ENCODE measurements at regions of chr10 and their contacts with region 1.

Region 1: DNA sequence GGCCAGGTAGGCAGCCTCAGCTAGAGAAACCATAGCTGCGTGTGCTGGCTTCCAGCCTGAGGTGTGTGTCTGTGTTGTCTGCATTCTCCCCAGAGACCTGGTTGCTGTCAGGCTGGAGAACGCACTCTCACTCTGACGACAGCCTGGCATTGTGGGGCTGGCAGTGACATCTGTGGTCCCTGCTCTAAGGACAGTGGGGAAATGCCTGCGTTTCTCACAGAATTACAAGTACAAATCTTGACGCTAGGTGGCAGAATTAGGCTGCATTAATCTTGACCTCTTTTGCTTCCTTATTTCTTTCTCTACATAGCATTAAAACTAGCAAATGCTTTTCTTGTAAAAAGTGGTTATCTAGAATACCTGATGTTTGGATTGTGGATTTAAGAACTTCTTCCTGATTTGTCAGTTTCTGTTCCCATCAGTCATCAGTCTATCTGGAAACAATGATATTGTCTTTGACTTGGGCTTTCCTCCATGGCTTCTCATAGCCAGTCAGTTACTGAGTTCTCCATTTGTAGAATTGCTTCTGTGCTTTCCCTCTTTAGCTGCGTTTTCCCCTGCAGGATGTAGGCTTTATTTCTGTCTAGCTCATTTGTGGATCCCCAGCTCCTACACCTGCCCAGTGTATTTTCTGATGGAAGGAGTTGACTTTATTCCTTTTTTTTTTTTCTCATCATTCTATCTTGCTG is 86.0 kb downstream of the FANK1 start:
- DNase-seq: peak in 3 of 5 donors; percentile 28 to 56 (median 37)
- H3K4me3 ChIP-seq: no peak overlapping the region
- H3K27ac ChIP-seq: no peak overlapping the region
- H3K4me1 ChIP-seq: peaks cover 2% of the 10 kb centered on the region
- H3K27me3 ChIP-seq: no peaks in the 10 kb centered on the region
- CTCF ChIP-seq: peak; percentile 44 to 83 (median 73)
- EP300 ChIP-seq: no peak
- POLR2A ChIP-seq: no peak

Region 2: DNA sequence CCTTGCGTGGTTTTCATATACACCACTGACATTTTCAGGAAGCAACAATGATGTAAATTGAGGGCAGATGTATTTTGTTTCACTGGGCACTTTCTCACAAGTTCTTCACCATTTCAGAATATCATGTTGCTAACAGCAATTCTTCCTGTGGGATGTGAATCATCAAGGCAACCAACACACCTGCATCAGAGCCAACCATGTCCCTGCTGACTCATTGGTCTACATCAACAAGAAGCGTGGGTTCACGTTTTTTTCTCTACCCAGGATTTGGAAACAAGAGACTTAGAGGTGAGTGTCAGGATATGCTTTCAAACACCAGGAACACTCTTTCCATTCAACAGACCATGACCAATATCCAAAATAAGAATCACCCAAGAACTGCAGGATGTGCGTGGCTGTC is 503.3 kb before region 1 on chr10:
- intact Hi-C with region 1: no loop called
- DNase-seq: no peak
- H3K4me3 ChIP-seq: no peak overlapping the region
- H3K27ac ChIP-seq: no peak overlapping the region
- H3K4me1 ChIP-seq: peaks cover 1% of the 10 kb centered on the region
- H3K27me3 ChIP-seq: no peaks in the 10 kb centered on the region
- CTCF ChIP-seq: no peak
- EP300 ChIP-seq: no peak
- POLR2A ChIP-seq: no peak

Region 3: DNA sequence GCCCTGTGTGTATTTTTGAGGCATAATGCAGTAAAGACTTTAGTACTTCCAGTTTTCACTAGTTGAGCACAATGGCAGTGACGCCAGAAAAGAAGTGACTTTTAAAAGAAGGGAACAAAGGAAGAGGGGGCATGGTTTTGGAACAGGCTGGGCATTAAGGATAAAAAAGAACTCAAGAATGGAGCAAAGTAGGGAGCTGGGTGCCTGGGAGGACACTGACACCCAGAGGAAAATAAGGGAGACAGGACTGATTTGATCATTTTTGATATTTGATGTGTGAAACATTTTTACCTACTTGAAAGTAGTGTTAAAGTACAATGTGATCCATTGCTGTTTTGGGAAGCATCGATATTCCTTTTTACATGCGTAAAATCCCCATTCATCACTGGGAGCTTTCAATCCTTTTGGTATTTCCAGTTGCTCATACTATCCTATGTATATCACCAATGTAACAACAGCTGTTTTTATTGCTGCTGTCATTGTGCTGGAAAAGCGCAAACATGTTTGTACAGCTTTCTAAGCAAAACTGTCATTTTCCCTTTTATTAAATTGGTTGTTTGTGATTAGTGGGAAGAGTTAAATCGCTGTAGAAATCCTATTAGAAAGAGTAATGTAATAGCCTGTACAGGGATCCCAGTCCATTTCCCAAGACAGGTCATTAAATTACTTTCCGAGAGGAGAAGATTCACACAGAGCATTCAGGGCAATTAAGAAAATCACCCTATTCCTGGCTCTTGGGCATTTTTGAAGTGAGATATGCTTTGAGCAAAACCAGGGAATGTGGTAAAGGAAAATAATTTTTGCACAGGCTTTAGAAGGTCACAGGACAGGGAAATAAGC is 320.6 kb after region 1 on chr10:
- intact Hi-C with region 1: loop called in 1 of 4 experiments (anchors 2 kb)
- DNase-seq: peak in 1 of 5 donors; percentile 34
- H3K4me3 ChIP-seq: no peak overlapping the region
- H3K27ac ChIP-seq: peak overlapping the region in 1 of 2 donors; percentile 3
- H3K4me1 ChIP-seq: peaks cover 14% of the 10 kb centered on the region
- H3K27me3 ChIP-seq: no peaks in the 10 kb centered on the region
- CTCF ChIP-seq: peak in 2 of 3 donors; percentile 10 to 42
- EP300 ChIP-seq: no peak
- POLR2A ChIP-seq: no peak

Region 4: DNA sequence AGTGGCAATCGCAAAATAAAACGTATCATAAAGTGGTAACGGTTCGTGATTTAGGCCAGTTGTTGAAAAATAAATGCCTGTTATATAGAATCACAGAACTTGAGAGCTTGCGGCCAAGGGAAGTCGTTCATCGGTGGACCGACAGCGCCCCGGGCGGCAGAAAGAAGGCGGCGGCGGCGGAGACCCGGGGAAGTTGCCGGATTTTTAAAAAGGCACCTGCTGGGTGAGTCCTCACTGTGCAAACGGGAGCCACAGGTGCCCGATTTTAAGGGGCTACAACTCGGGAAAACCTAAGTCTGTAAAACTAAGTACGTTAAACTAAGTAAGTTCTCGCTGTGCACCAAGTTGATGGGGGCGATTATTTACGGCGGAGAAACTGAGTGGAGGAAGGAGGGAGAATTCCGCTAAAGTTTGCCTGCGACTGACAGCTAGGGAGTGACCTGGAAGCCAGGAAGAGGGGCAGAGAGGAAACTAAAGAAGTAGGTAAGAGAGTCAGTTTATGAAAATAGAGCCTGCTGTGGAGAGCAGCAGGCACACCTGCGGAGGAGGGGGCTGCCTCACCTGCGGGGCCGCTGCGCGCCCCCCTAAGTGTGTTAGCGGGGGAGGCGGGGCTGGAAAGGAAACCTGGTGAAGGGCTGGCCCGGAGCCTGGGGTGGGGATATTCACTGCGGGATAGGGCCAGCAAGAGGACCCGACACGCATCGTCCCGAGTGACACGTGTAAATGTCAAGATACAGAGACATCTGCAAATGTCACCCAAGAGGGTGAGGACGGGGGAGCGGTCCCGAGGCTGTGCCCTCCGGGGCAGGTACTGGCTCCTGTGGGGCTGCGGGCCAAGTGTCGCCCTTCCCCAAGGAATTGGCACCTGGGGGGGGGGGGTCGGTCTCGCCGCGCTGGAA is 404.9 kb after region 1 on chr10:
- intact Hi-C with region 1: loop called (anchors 2 to 10 kb)
- DNase-seq: peak; percentile 75 to 87 (median 81)
- H3K4me3 ChIP-seq: peak overlapping the region; percentile 36
- H3K27ac ChIP-seq: peak overlapping the region; percentile 19 to 66
- H3K4me1 ChIP-seq: peaks cover 5% of the 10 kb centered on the region
- H3K27me3 ChIP-seq: no peaks in the 10 kb centered on the region
- CTCF ChIP-seq: peak; percentile 67 to 80 (median 75)
- EP300 ChIP-seq: no peak
- POLR2A ChIP-seq: no peak

Region 5: DNA sequence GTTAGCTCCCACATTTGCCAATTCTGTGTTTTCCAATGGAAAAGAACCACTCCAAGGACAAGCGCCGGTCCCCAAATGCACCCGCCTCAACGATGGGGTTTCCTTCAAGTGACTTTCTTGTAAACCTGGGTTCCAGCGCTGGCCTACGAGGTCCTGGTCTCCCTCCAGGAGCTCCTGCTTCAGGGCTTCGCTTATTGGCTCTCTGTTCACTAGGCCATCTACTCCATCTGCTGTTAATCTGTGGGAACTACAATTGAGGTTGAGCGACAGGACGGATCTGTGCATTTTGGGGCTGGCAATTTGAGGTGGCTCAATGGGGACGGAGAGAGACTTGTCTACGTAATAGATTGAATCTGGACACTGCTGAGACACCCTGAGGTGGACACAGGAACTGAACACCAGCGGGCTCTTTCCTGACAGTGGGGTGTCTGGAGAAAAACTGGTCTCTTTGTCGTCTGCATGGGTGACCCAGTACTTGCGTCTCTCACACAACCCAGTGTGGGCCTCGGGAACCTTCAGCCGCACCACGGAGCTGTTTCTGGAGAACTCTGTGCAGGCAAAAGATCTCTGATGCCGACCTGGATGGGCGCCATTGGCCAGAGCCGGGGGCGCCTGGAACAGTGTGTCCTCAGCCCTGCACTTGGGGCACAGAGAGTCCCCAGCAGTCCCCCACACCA is 521.8 kb after region 1 on chr10:
- intact Hi-C with region 1: loop called in 3 of 4 experiments (anchors 2 to 10 kb)
- DNase-seq: peak; percentile 34 to 51 (median 40)
- H3K4me3 ChIP-seq: no peak overlapping the region
- H3K27ac ChIP-seq: no peak overlapping the region
- H3K4me1 ChIP-seq: no peaks in the 10 kb centered on the region
- H3K27me3 ChIP-seq: no peaks in the 10 kb centered on the region
- CTCF ChIP-seq: peak; percentile 44 to 68 (median 58)
- EP300 ChIP-seq: no peak
- POLR2A ChIP-seq: no peak

Region 6: DNA sequence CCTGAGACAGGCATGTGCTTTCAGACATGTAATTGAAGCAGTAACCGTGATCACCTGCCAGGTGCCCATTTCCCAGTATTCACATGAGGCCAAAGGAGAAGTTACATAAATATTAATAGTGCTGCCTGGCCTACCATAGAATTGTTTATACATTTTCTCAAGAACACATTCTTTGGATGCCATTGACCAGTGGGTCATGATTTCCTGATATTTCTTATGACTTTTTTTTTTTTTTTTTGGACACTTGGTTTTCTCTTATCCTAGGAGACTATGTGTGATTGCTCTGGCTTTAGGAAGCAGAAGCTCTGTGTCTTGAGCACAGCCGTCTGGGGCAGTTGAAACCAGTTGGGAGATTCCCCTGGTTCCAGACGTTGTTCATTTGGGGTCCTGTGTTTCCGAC is 1422.8 kb after region 1 on chr10:
- intact Hi-C with region 1: loop called in 1 of 4 experiments (anchors 5 kb)
- DNase-seq: no peak
- H3K4me3 ChIP-seq: no peak overlapping the region
- H3K27ac ChIP-seq: no peak overlapping the region
- H3K4me1 ChIP-seq: peaks cover 11% of the 10 kb centered on the region
- H3K27me3 ChIP-seq: no peaks in the 10 kb centered on the region
- CTCF ChIP-seq: no peak
- EP300 ChIP-seq: no peak
- POLR2A ChIP-seq: no peak